Ovary (tissue), 10 donors: ENCODE measurements at regions of chr11 and their contacts with region 1.

Region 1: GRCh38 chr11:72831513-72832300 is 17.5 kb downstream of the ATG16L2 start:
- DNase-seq: peak; percentile 78 to 89 (median 87)
- H3K4me3 ChIP-seq: no peak overlapping the region
- H3K27ac ChIP-seq: peak overlapping the region; percentile 1 to 31
- H3K4me1 ChIP-seq: peaks cover 34% of the 10 kb centered on the region
- H3K27me3 ChIP-seq: no peaks in the 10 kb centered on the region
- CTCF ChIP-seq: peak; percentile 76 to 96 (median 94)
- EP300 ChIP-seq: no peak
- POLR2A ChIP-seq: no peak

Region 2: DNA sequence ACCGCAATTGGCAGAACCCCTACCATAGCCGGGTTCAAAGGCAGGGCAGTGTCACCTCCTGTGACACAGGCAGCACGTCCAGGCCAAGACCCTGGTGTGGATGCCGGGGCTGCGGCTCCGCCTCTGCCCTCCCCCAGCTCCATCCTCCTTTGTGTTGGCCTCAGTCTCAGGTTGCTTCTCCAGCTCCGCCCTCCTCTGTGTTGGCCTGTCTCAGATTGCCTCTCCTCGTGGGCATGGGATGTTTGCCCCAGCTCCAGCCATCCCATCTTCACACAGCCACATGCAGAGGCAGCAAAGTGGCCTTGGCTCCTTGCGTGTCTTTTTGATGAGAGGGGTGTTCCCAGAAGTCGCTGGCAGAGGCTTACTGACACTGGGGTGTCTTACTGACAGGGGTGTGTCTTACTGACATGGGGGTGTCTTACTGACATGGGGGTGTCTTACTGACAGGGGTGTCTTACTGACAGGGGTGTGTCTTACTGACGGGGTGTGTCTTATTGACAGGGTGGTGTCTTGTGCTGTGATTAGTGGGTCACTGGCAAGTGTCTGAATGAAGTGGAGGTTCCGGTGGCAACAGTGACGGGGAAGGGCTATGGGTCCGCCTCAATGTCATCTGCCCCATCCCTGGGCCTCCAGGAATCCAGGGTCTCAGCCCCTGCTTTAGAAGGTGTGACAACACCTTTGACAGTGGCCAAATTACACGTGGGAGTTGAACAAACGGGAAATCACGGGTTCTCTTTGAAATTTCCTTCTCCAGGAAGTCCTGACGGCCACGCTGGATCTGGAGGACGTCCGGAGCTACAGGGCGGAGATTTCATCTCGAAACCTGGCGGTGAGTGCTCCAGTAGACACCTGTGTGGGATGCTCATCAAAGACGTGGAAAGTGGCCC is 1353.8 kb before region 1 on chr11:
- intact Hi-C with region 1: no loop called
- DNase-seq: no peak
- H3K4me3 ChIP-seq: no peak overlapping the region
- H3K27ac ChIP-seq: no peak overlapping the region
- H3K4me1 ChIP-seq: no peaks in the 10 kb centered on the region
- H3K27me3 ChIP-seq: no peaks in the 10 kb centered on the region
- CTCF ChIP-seq: no peak
- EP300 ChIP-seq: no peak
- POLR2A ChIP-seq: no peak

Region 3: DNA sequence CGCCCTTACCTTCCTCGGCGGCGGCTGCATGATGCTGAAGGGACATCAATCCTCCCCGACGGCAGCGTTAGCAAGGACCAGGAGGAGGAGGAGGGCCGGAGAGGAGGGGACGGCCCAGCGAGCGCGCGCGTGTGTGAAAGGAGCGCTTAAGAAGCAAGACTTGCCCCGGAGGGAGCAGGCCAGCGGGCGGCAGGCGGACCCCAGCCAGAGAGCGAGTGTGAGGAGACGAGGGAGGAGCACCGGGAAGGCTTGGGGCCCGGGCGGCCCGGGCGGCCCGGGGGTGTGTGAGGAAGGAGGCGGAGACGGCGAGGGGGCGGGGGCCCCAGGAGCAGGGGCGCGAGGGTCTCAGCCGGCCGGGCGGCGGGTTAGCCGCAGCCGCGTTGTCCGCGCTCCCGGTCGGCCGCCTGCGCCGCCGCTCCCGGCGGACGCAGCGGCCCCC is 310.2 kb after region 1 on chr11:
- intact Hi-C with region 1: loop called in 2 of 4 experiments (anchors 5 to 10 kb)
- DNase-seq: peak; percentile 74 to 85 (median 80)
- H3K4me3 ChIP-seq: peak overlapping the region; percentile 94
- H3K27ac ChIP-seq: peak overlapping the region; percentile 91 to 98
- H3K4me1 ChIP-seq: no peaks in the 10 kb centered on the region
- H3K27me3 ChIP-seq: no peaks in the 10 kb centered on the region
- CTCF ChIP-seq: no peak
- EP300 ChIP-seq: no peak
- POLR2A ChIP-seq: peak; percentile 8

Region 4: GRCh38 chr11:73177778-73178577 is 346.3 kb after region 1 on chr11:
- intact Hi-C with region 1: loop called (anchors 1 to 5 kb)
- DNase-seq: peak; percentile 88 to 92 (median 90)
- H3K4me3 ChIP-seq: no peak overlapping the region
- H3K27ac ChIP-seq: peak overlapping the region in 1 of 2 donors; percentile 78
- H3K4me1 ChIP-seq: peaks cover 34% of the 10 kb centered on the region
- H3K27me3 ChIP-seq: no peaks in the 10 kb centered on the region
- CTCF ChIP-seq: peak; percentile 66 to 95 (median 86)
- EP300 ChIP-seq: no peak
- POLR2A ChIP-seq: peak; percentile 24

Region 5: GRCh38 chr11:73236854-73237253 is 405.1 kb after region 1 on chr11:
- intact Hi-C with region 1: loop called in 2 of 4 experiments (anchors 5 to 10 kb)
- DNase-seq: peak in 2 of 5 donors; percentile 18 to 38
- H3K4me3 ChIP-seq: no peak overlapping the region
- H3K27ac ChIP-seq: no peak overlapping the region
- H3K4me1 ChIP-seq: peaks cover 3% of the 10 kb centered on the region
- H3K27me3 ChIP-seq: no peaks in the 10 kb centered on the region
- CTCF ChIP-seq: no peak
- EP300 ChIP-seq: no peak
- POLR2A ChIP-seq: no peak

Region 6: GRCh38 chr11:73242251-73243079 is 410.8 kb after region 1 on chr11:
- intact Hi-C with region 1: loop called in 2 of 4 experiments (anchors 5 to 10 kb)
- DNase-seq: peak; percentile 73 to 90 (median 78)
- H3K4me3 ChIP-seq: peak overlapping the region; percentile 11
- H3K27ac ChIP-seq: no peak overlapping the region
- H3K4me1 ChIP-seq: peaks cover 2% of the 10 kb centered on the region
- H3K27me3 ChIP-seq: no peaks in the 10 kb centered on the region
- CTCF ChIP-seq: peak; percentile 64 to 79 (median 73)
- EP300 ChIP-seq: no peak
- POLR2A ChIP-seq: no peak

Region 7: DNA sequence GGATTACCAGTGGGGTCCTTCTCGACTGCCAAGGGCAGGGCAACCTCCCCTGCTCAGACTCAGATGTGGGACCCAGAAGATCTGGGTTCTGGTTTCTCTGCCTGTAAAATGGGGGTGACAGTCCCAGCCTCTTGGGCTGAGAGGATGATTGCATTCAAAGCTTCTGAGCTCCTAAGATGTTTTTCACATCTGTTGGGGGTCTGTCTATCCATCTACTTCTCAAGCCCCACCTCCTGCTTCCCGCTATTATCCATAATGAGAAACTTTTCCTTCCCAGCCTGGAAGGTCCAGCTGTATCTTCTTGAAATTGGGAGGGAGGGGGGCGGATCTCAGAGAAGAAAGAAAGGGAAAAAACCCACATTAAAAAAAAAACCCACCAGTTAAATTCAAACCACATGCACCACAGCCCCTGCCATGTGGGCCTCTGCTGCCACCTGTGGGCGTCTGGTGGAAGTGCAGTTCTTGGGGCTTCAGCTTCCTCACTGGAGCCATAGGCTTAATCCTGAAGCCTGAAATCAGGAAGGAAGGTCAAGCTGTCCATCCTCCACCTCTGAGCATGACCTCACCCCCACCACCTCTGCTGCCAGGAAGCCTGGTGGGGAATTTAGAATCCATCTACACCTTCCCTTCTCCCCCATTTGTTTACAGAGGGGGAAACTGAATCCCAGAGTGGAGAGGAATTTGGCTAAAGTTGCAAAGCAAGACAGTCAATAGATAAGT is 503.7 kb after region 1 on chr11:
- intact Hi-C with region 1: loop called in 1 of 4 experiments (anchors 10 kb)
- DNase-seq: peak; percentile 78 to 93 (median 90)
- H3K4me3 ChIP-seq: no peak overlapping the region
- H3K27ac ChIP-seq: peak overlapping the region; percentile 62 to 68
- H3K4me1 ChIP-seq: peaks cover 36% of the 10 kb centered on the region
- H3K27me3 ChIP-seq: no peaks in the 10 kb centered on the region
- CTCF ChIP-seq: peak; percentile 88 to 97 (median 90)
- EP300 ChIP-seq: no peak
- POLR2A ChIP-seq: no peak